Sciatic nerve (tissue), 2 donors: ENCODE measurements at regions of chr7 and their contacts with region 1.

Region 1: DNA sequence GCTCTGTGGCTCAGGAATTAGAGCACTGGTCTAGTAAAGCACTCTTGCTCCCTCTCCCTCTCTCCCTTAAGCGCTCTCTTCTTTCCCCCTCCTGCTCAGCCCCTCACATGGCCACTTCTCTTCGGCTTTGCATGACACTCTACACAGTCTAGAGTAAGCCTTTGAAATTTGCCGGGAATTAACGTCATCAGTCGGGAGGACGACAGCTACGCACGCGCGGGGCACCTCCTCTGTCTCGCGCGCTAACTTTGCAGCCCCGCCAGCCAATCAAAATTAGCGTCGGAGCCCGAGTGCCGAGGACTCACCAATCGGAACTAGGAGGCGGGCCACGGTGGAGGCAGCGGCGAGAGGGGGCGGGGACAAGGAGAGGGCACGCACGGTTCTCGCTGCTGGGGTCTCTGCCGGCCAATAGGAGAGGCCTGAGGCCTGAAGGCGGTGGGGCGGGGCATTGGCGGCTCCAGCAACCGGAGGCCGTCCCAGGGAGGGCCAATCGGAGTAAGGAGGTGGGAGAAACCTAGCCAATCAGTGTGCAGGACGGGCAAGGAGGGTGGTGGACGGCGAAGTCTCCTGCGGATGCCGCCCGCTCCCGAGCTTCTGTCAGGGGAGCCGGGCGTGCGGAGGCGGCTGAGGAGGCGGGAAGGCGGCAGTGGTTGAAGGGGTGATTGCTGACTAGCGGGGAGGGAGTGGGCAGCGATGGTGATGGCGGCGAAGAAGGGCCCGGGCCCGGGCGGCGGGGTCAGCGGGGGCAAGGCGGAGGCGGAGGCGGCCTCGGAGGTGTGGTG is at the start of gene AGFG2:
- DNase-seq: peak; percentile 100
- ATAC-seq: peak; percentile 99
- total RNA-seq, gene AGFG2: 30.6 TPM

Region 2: DNA sequence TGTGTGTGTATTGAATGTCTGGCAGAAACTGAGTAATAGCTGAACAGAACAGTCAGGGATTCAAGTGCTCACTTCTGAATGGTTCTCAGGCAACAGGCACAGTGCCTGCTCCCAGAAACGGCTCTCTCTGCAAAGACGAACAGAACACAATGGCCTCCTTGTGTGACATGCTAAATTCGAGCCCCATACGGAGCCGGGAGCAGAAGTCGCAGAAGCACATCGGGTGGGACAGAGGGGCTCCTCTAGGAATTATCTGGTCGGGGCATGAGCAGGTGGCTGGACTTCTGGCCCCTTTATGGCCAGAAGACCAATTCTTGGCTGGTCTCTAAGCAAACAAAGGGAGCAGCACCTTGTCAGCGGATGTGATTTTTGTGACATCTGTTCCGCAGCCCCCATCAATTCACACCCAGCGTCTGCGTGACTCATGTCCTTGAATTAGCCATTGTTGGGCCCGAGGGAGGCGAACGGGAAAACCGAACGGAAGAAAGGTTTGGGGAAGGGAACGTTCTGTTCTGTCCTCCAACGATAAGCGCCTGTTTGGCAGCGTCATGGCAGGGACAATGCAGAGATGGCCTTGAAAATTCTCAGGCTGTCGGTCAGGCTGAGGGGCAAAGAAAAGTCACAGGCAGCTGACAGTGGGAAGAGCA is 1969.0 kb before region 1 on chr7:
- intact Hi-C with region 1: no loop called
- DNase-seq: no peak
- ATAC-seq: peak; percentile 68

Region 3: GRCh38 chr7:100570954-100571828 is 32.3 kb after region 1 on chr7:
- intact Hi-C with region 1: no loop called
- DNase-seq: no peak
- ATAC-seq: no peak

Region 4: GRCh38 chr7:100609958-100610357 is 71.1 kb after region 1 on chr7:
- intact Hi-C with region 1: loop called (anchors 2 kb)
- DNase-seq: no peak
- ATAC-seq: no peak